Heart left ventricle (tissue), 16 donors: ENCODE measurements at regions of chr11 and their contacts with region 1.

Region 1: GRCh38 chr11:73779084-73779902 is 8.4 kb upstream of the MRPL48 start:
- DNase-seq: peak; percentile 98 to 99 (median 99)
- ATAC-seq: peak; percentile 100
- H3K4me3 ChIP-seq: peak overlapping the region; percentile 26 to 71 (median 59)
- H3K27ac ChIP-seq: peak overlapping the region; percentile 80 to 98 (median 94)
- H3K4me1 ChIP-seq: peaks cover 0 to 13% (median 2%) of the 10 kb centered on the region in 12 donors
- H3K27me3 ChIP-seq: no peaks in the 10 kb centered on the region
- CTCF ChIP-seq: peak in 2 of 12 donors; percentile 2 to 5
- POLR2A ChIP-seq: peak in 1 of 2 donors; percentile 61

Region 2: GRCh38 chr11:73760679-73761402 is 18.5 kb before region 1 on chr11 and contains the start of gene RAB6A:
- intact Hi-C with region 1: loop called in 7 of 10 experiments (anchors 1 kb)
- DNase-seq: peak; percentile 100
- ATAC-seq: peak; percentile 95 to 99 (median 98)
- H3K4me3 ChIP-seq: peak within 1 kb of the TSS; percentile 61 to 99 (median 89)
- H3K27ac ChIP-seq: peak within 1 kb of the TSS; percentile 90 to 99 (median 98)
- H3K4me1 ChIP-seq: peaks cover 2 to 29% (median 16%) of the 10 kb centered on the region in 12 donors
- H3K27me3 ChIP-seq: no peaks in the 10 kb centered on the region
- CTCF ChIP-seq: peak in 10 of 12 donors; percentile 20 to 61 (median 41)
- POLR2A ChIP-seq: peak in 1 of 2 donors; percentile 85
- total RNA-seq, gene RAB6A: 92.2 to 143 (median 123) TPM

Region 3: GRCh38 chr11:73818846-73819245 is 39.6 kb after region 1 on chr11:
- intact Hi-C with region 1: no loop called
- DNase-seq: no peak
- ATAC-seq: no peak
- H3K4me3 ChIP-seq: no peak overlapping the region
- H3K27ac ChIP-seq: no peak overlapping the region
- H3K4me1 ChIP-seq: peaks cover 0 to 7% (median 0%) of the 10 kb centered on the region in 12 donors
- H3K27me3 ChIP-seq: no peaks in the 10 kb centered on the region
- CTCF ChIP-seq: no peak
- POLR2A ChIP-seq: no peak